ENCODE measurements at regions of chr1 and their contacts with region 1.

Region 1: GRCh38 chr1:85307987-85308832 is 31.8 kb upstream of the BCL10 start:
- DNase-seq: peak in 7 of 9 donors; percentile 26 to 49 (median 35)
- ATAC-seq: peak; percentile 83
- H3K4me3 ChIP-seq: no peak overlapping the region
- H3K4me3 Mint-ChIP-seq: peak overlapping the region in 9 of 10 donors; percentile 12 to 77 (median 60)
- H3K27ac ChIP-seq: no peak overlapping the region
- H3K27ac Mint-ChIP-seq: no peak overlapping the region
- H3K4me1 ChIP-seq: no peaks in the 10 kb centered on the region
- H3K4me1 Mint-ChIP-seq: peaks cover 0 to 10% (median 4%) of the 10 kb centered on the region in 7 donors
- H3K27me3 ChIP-seq: no peaks in the 10 kb centered on the region
- H3K27me3 Mint-ChIP-seq: peaks cover 24 to 62% (median 39%) of the 10 kb centered on the region in 5 donors

Region 2: GRCh38 chr1:85576642-85577418 is 268.6 kb after region 1 on chr1:
- CTCF ChIA-PET with region 1: no interaction called
- POLR2A ChIA-PET with region 1: no interaction called
- intact Hi-C with region 1: loop called (anchors 2 to 5 kb)
- DNase-seq: peak in 1 of 9 donors; percentile 73
- ATAC-seq: peak; percentile 33
- H3K4me3 ChIP-seq: no peak overlapping the region
- H3K4me3 Mint-ChIP-seq: peak overlapping the region; percentile 44 to 79 (median 69)
- H3K27ac ChIP-seq: no peak overlapping the region
- H3K27ac Mint-ChIP-seq: peak overlapping the region in 2 of 9 donors; percentile 10 to 23
- H3K4me1 ChIP-seq: no peaks in the 10 kb centered on the region
- H3K4me1 Mint-ChIP-seq: peaks cover 5 to 33% (median 29%) of the 10 kb centered on the region in 7 donors
- H3K27me3 ChIP-seq: peaks cover 0 to 12% of the 10 kb centered on the region in 2 donors
- H3K27me3 Mint-ChIP-seq: peaks cover 65 to 74% (median 73%) of the 10 kb centered on the region in 5 donors

Region 3: DNA sequence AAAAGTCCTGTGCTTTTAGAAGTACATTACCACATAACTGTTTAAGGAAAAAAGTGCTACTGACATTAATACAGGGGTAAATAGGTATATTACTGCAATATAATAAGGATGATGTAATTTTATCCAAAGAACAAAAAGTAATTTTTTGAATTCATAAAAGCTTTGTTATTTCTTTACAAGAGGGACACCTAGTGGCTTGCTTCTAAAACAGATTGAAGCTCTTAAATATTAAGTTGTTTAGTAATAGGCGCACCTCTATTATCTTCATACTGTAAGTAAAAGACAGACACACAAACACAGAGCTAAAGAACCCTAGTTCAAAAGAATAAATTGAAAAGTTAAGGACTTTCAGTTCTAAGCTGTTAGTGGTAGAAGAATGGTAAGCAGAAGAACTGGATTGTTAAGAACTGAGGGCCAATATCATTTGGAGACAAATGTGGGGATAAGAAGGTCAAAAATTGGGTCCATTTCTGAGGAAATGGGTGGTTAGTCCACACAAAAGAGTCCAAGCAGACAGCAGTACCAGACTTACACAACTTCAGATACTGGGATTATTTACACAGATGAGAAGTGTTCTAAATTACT is 384.6 kb after region 1 on chr1:
- CTCF ChIA-PET with region 1: no interaction called
- POLR2A ChIA-PET with region 1: no interaction called
- intact Hi-C with region 1: loop called (anchors 1 to 2 kb)
- DNase-seq: no peak
- ATAC-seq: no peak
- H3K4me3 ChIP-seq: no peak overlapping the region
- H3K4me3 Mint-ChIP-seq: no peak overlapping the region
- H3K27ac ChIP-seq: no peak overlapping the region
- H3K27ac Mint-ChIP-seq: peak overlapping the region in 1 of 9 donors; percentile 13
- H3K4me1 ChIP-seq: no peaks in the 10 kb centered on the region
- H3K4me1 Mint-ChIP-seq: peaks cover 4 to 40% (median 31%) of the 10 kb centered on the region in 7 donors
- H3K27me3 ChIP-seq: no peaks in the 10 kb centered on the region
- H3K27me3 Mint-ChIP-seq: no peaks in the 10 kb centered on the region

Region 4: DNA sequence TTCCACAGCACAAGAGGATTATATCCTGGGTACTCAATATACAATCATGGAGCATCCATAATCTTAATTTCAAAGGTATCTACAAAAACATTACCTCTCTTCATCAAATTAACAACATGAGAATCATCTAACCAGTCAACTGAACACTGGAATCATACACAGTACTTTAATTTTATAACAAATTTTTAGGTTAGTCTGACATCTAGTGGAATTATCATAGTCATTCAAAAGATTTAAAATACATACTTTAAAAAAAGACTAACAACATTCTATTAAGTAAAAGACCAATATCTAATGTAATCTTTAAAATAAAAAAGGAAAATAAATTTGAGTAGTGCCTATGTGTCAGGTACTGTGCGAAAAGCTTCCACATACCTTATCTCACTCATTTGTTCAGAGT is 1379.4 kb after region 1 on chr1:
- CTCF ChIA-PET with region 1: no interaction called
- POLR2A ChIA-PET with region 1: no interaction called
- intact Hi-C with region 1: loop called in 1 of 2 experiments (anchors 10 kb)
- DNase-seq: no peak
- ATAC-seq: no peak
- H3K4me3 ChIP-seq: no peak overlapping the region
- H3K4me3 Mint-ChIP-seq: no peak overlapping the region
- H3K27ac ChIP-seq: no peak overlapping the region
- H3K27ac Mint-ChIP-seq: no peak overlapping the region
- H3K4me1 ChIP-seq: no peaks in the 10 kb centered on the region
- H3K4me1 Mint-ChIP-seq: no peaks in the 10 kb centered on the region
- H3K27me3 ChIP-seq: no peaks in the 10 kb centered on the region
- H3K27me3 Mint-ChIP-seq: peaks cover 0 to 7% (median 0%) of the 10 kb centered on the region in 5 donors